Heart left ventricle (tissue), 16 donors: ENCODE measurements at regions of chr9 and their contacts with region 1.

Region 1: DNA sequence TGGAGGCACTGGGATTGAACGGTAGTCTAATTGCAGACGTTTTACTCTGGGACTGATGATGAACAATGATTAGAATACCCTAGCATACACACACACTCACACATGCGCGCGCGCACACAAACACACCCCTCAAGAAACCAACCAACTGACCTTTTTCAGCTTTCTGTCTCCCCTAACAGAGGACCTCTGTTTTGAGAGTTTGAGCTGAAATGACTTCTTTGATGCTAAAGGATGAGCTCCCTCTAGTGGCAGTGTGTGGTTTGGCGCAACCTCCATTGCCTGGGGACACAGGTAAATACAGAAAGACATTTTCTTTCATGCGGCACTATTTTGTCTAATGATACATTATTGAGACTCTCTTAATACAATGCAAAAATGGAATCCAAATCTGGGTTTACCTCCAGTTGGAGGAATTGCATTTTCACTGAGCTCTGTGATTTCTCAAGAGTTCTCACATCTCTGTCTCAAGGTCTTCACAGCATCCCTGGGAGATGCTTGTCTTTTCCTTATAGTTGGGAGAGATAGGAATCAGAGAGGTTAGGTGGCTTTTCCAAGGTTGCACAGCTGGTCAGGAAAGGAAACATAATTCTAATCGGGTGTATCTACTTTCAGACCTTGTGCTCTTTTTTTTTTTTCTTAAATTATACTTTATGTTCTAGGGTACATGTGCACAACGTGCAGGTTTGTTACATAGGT is 187.5 kb downstream of the TMEM38B start:
- DNase-seq: peak in 4 of 5 donors; percentile 37 to 65 (median 47)
- ATAC-seq: peak in 3 of 4 donors; percentile 45 to 58 (median 57)
- H3K4me3 ChIP-seq: no peak overlapping the region
- H3K27ac ChIP-seq: no peak overlapping the region
- H3K4me1 ChIP-seq: no peaks in the 10 kb centered on the region
- H3K27me3 ChIP-seq: no peaks in the 10 kb centered on the region
- CTCF ChIP-seq: peak; percentile 67 to 90 (median 80)
- POLR2A ChIP-seq: no peak

Region 2: GRCh38 chr9:105608721-105609598 is 272.8 kb before region 1 on chr9:
- intact Hi-C with region 1: loop called (anchors 2 to 10 kb)
- DNase-seq: no peak
- ATAC-seq: peak in 1 of 4 donors; percentile 56
- H3K4me3 ChIP-seq: no peak overlapping the region
- H3K27ac ChIP-seq: no peak overlapping the region
- H3K4me1 ChIP-seq: no peaks in the 10 kb centered on the region
- H3K27me3 ChIP-seq: no peaks in the 10 kb centered on the region
- CTCF ChIP-seq: peak; percentile 44 to 72 (median 58)
- POLR2A ChIP-seq: no peak

Region 3: DNA sequence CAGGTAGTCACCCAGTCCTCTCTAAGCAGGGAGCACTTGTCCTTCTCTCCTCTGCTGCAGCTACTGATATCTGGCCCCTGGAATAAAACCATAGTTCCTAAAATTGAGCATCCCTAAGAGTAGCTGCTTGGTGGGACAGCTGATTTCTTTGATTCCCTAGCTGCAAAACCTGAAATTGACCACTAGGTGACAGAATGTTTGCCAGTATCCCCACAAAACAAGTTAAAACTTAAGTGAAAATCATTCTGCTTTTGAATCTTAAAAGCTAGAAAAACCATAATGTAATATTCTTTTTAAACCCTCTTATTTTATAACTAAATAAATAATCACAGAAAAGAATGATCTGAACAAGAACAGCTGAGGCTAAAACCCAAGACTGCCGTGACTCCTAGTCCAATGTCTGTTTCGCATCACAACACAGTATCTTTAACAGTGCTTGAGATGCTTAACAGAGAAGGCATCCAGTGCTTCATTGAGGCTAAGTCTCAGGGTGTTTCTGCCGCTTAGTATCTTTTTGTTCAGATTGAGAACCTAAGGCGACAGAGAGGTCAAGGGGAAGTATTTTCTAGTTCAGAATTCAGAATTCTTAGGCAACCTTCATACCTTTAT is 243.9 kb before region 1 on chr9:
- intact Hi-C with region 1: no loop called
- DNase-seq: no peak
- ATAC-seq: no peak
- H3K4me3 ChIP-seq: no peak overlapping the region
- H3K27ac ChIP-seq: no peak overlapping the region
- H3K4me1 ChIP-seq: no peaks in the 10 kb centered on the region
- H3K27me3 ChIP-seq: no peaks in the 10 kb centered on the region
- CTCF ChIP-seq: peak in 8 of 12 donors; percentile 20 to 50 (median 34)
- POLR2A ChIP-seq: no peak

Region 4: GRCh38 chr9:105760053-105760452 is 121.7 kb before region 1 on chr9:
- intact Hi-C with region 1: no loop called
- DNase-seq: no peak
- ATAC-seq: no peak
- H3K4me3 ChIP-seq: no peak overlapping the region
- H3K27ac ChIP-seq: no peak overlapping the region
- H3K4me1 ChIP-seq: peaks cover 0 to 6% (median 0%) of the 10 kb centered on the region in 12 donors
- H3K27me3 ChIP-seq: no peaks in the 10 kb centered on the region
- CTCF ChIP-seq: no peak
- POLR2A ChIP-seq: no peak

Region 5: DNA sequence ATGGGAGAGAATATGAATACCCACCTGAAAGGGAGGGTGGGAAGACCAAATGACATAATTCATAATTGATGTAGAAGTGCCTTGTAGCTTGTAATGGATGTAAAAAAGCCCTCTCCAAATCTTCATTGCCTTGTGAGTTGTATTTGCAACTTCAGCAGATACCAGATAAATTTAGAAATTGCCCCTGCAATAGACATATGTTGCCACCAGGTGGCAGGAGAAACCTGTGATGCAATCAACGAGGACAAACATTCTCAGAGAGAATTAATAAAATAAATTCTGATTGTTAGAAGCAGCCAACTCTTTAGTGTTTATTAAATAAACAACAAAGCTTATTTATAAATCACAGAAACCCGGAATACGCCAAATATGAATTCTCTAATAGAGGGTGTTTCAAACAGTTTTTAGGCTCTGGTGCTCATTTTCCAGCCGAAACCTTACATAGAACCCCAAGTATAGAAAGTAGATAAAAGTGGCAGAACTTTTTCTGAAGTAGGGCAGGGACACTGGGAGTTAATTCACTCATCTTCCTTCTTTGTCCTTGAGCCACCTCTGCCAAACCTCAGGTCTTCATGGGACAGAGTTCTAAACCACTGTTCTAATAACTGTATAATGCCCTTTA is 39.7 kb before region 1 on chr9:
- intact Hi-C with region 1: loop called in 2 of 10 experiments (anchors 5 kb)
- DNase-seq: no peak
- ATAC-seq: no peak
- H3K4me3 ChIP-seq: no peak overlapping the region
- H3K27ac ChIP-seq: no peak overlapping the region
- H3K4me1 ChIP-seq: no peaks in the 10 kb centered on the region
- H3K27me3 ChIP-seq: no peaks in the 10 kb centered on the region
- CTCF ChIP-seq: peak; percentile 47 to 82 (median 61)
- POLR2A ChIP-seq: no peak